Activated naive CD4-positive, alpha-beta T cell treated with anti-CD3 and anti-CD28 coated beads for 36 hours (primary cell): ENCODE measurements at regions of chr13 and their contacts with region 1.

Region 1: DNA sequence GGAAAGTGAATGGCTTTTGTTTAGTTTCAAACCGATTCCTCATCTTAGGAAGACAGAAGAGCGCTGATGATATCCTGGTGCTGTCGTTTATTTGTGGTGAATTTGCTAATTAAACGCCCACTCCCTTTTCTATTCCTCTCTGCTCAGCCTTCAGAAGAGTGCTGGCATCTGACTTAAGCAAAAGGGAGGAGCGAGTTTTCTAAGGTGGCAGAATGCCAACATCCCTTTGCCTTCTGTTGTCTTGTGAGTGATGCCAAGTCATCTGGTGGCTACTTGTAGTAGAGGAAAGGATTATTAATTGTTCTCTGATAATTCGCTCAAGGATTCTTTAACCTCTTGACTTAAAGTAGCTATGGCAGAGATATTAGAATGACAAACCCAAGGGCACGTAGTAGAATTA is 68.1 kb downstream of the ERCC5 start:
- DNase-seq: no peak
- H3K4me3 Mint-ChIP-seq: no peak overlapping the region
- H3K27ac Mint-ChIP-seq: no peak overlapping the region
- H3K4me1 Mint-ChIP-seq: no peaks in the 10 kb centered on the region
- H3K27me3 Mint-ChIP-seq: peaks cover 23% of the 10 kb centered on the region

Region 2: GRCh38 chr13:102333320-102334202 is 580.4 kb before region 1 on chr13:
- CTCF ChIA-PET with region 1: no interaction called
- intact Hi-C with region 1: no loop called
- DNase-seq: no peak
- H3K4me3 Mint-ChIP-seq: no peak overlapping the region
- H3K27ac Mint-ChIP-seq: no peak overlapping the region
- H3K4me1 Mint-ChIP-seq: no peaks in the 10 kb centered on the region
- H3K27me3 Mint-ChIP-seq: peaks cover 35% of the 10 kb centered on the region

Region 3: GRCh38 chr13:102845630-102846260 is 68.2 kb before region 1 on chr13 and contains the start of gene ERCC5:
- CTCF ChIA-PET with region 1: no interaction called
- intact Hi-C with region 1: no loop called
- DNase-seq: peak; percentile 96
- H3K4me3 Mint-ChIP-seq: peak within 1 kb of the TSS; percentile 92
- H3K27ac Mint-ChIP-seq: peak within 1 kb of the TSS; percentile 96
- H3K4me1 Mint-ChIP-seq: peaks cover 35% of the 10 kb centered on the region
- H3K27me3 Mint-ChIP-seq: no peaks in the 10 kb centered on the region
- total RNA-seq, gene ERCC5: 52.0 to 54.0 TPM

Region 4: GRCh38 chr13:103140001-103140671 is 226.2 kb after region 1 on chr13:
- CTCF ChIA-PET with region 1: no interaction called
- intact Hi-C with region 1: loop called (anchors 1 kb)
- DNase-seq: no peak
- H3K4me3 Mint-ChIP-seq: no peak overlapping the region
- H3K27ac Mint-ChIP-seq: no peak overlapping the region
- H3K4me1 Mint-ChIP-seq: no peaks in the 10 kb centered on the region
- H3K27me3 Mint-ChIP-seq: no peaks in the 10 kb centered on the region